ENCODE measurements at regions of chr1 and their contacts with region 1.

Region 1: DNA sequence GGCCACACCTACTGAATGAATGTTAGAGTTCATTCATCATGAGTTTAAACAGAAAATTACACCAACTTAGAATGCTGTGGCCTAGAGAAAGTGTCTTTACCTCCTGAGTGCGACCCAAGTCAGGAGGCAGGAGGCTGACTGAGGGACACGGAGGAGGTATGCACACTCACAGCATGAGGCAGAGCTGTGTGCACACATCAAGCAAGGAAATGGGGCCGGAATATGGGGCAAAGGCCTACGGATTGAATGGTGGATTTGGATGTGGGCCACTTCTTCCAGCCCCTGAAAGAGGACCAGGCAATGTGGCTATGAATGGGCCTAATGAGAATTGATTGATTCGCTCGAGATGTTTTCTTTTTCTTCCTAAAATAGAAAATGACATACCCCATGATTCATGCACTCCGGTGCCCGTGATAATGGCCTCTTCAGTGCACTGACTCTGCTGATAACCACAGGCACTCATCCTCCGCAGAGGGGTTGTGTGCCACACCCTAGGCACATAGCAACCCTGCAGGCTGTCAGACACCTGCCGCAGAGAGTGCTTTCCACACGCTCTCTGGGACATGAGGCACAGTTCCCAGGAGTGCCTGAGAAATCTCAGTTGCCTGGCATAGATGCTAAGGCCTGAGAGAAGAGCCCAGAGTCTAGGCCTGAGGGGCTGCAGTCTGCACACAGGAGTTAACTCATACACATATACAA is 155.5 kb downstream of the GLUL start:
- DNase-seq: peak; percentile 3
- ATAC-seq: no peak
- H3K4me3 ChIP-seq: no peak overlapping the region
- H3K27ac ChIP-seq: no peak overlapping the region
- H3K4me1 ChIP-seq: no peaks in the 10 kb centered on the region
- H3K27me3 ChIP-seq: no peaks in the 10 kb centered on the region
- CTCF ChIP-seq: no peak
- POLR2A ChIP-seq: no peak
- RAD21 ChIP-seq: no peak

Region 2: DNA sequence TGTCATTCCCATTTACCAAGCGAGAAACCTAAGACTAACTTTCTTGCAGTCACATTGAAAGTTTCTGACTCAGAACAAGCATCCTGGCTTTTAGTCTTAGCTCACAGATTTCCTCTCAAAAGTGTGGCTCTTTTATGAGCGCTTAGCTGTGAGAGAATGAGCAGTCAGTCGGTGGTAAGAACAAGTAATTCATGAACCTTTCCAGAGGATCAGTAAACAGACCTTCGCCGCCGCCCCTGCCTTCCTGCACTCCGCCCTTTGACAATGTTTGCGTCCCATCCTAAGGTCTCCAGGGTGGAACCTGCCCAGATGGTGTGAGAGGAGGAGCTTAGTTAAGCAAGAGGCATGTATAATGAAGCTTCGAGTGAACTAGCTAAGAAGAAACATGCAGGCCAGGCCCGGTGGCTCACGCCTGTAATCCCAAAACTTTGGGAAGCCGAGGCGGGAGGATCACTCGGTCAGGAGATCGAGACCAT is 13.1 kb after region 1 on chr1:
- CTCF ChIA-PET with region 1: interaction called, 3 read pairs
- POLR2A ChIA-PET with region 1: interaction called, 13 read pairs
- dilution Hi-C with region 1: no loop called
- in situ Hi-C with region 1: no loop called
- intact Hi-C with region 1: no loop called
- DNase-seq: no peak
- ATAC-seq: no peak
- H3K4me3 ChIP-seq: no peak overlapping the region
- H3K27ac ChIP-seq: no peak overlapping the region
- H3K4me1 ChIP-seq: no peaks in the 10 kb centered on the region
- H3K27me3 ChIP-seq: no peaks in the 10 kb centered on the region
- CTCF ChIP-seq: no peak
- POLR2A ChIP-seq: no peak
- RAD21 ChIP-seq: no peak

Region 3: GRCh38 chr1:182279724-182280503 is 43.8 kb after region 1 on chr1:
- CTCF ChIA-PET with region 1: no interaction called
- POLR2A ChIA-PET with region 1: no interaction called
- dilution Hi-C with region 1: no loop called
- in situ Hi-C with region 1: no loop called
- intact Hi-C with region 1: no loop called
- DNase-seq: no peak
- ATAC-seq: no peak
- H3K4me3 ChIP-seq: no peak overlapping the region
- H3K27ac ChIP-seq: no peak overlapping the region
- H3K4me1 ChIP-seq: no peaks in the 10 kb centered on the region
- H3K27me3 ChIP-seq: no peaks in the 10 kb centered on the region
- CTCF ChIP-seq: no peak
- POLR2A ChIP-seq: no peak
- RAD21 ChIP-seq: no peak

Region 4: DNA sequence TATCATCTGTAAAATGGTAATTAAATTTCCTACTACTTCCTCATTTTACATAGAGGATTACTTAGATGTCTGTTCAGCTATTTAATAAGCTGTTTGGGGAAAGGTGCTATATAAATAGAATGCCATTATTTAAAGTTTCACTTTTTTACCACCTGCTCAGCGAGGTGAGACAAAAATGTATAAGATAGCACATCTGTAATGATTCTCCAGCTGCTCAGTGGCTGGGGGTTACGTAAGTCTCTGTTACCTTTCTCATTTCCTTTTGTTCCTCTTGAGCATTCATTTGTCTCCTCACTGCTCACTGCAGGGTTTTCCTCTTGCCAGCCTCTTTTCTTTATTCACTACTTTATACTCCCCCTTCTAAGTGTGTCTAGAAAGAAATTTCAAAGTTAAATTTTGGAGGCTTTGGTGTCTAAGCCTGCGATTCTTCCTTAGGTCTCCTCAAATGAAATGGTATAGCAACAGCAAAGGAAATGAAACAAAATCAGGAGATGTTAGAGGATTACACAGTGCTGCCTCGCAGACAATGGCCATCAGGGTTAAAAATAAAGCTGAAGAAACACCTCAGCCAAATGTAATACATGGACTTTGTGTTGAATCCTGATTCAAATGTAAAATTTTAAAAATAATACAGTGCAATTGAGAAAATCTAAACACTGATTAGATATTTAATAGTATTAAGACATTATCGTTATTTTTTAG is 441.4 kb after region 1 on chr1:
- CTCF ChIA-PET with region 1: no interaction called
- POLR2A ChIA-PET with region 1: no interaction called
- dilution Hi-C with region 1: no loop called
- in situ Hi-C with region 1: no loop called
- intact Hi-C with region 1: no loop called
- DNase-seq: no peak
- ATAC-seq: no peak
- H3K4me3 ChIP-seq: no peak overlapping the region
- H3K27ac ChIP-seq: no peak overlapping the region
- H3K4me1 ChIP-seq: no peaks in the 10 kb centered on the region
- H3K27me3 ChIP-seq: peaks cover 11% of the 10 kb centered on the region
- CTCF ChIP-seq: no peak
- POLR2A ChIP-seq: no peak
- RAD21 ChIP-seq: no peak